CD8-positive, alpha-beta memory T cell (primary cell): ENCODE measurements at regions of chr10 and their contacts with region 1.

Region 1: GRCh38 chr10:97701438-97702069 is 12.0 kb upstream of the MARVELD1 start:
- DNase-seq: peak in 4 of 5 donors; percentile 24 to 67 (median 52)
- H3K4me3 ChIP-seq: no peak overlapping the region
- H3K4me3 Mint-ChIP-seq: no peak overlapping the region
- H3K27ac ChIP-seq: no peak overlapping the region
- H3K27ac Mint-ChIP-seq: no peak overlapping the region
- H3K4me1 ChIP-seq: no peaks in the 10 kb centered on the region
- H3K4me1 Mint-ChIP-seq: no peaks in the 10 kb centered on the region
- H3K27me3 ChIP-seq: no peaks in the 10 kb centered on the region
- H3K27me3 Mint-ChIP-seq: peaks cover 16 to 20% of the 10 kb centered on the region in 2 donors

Region 2: GRCh38 chr10:97149079-97149531 is 552.4 kb before region 1 on chr10:
- CTCF ChIA-PET with region 1: no interaction called
- POLR2A ChIA-PET with region 1: no interaction called
- DNase-seq: no peak
- H3K4me3 ChIP-seq: no peak overlapping the region
- H3K4me3 Mint-ChIP-seq: no peak overlapping the region
- H3K27ac ChIP-seq: no peak overlapping the region
- H3K27ac Mint-ChIP-seq: no peak overlapping the region
- H3K4me1 ChIP-seq: no peaks in the 10 kb centered on the region
- H3K4me1 Mint-ChIP-seq: no peaks in the 10 kb centered on the region
- H3K27me3 ChIP-seq: no peaks in the 10 kb centered on the region
- H3K27me3 Mint-ChIP-seq: peaks cover 3 to 11% of the 10 kb centered on the region in 2 donors

Region 3: DNA sequence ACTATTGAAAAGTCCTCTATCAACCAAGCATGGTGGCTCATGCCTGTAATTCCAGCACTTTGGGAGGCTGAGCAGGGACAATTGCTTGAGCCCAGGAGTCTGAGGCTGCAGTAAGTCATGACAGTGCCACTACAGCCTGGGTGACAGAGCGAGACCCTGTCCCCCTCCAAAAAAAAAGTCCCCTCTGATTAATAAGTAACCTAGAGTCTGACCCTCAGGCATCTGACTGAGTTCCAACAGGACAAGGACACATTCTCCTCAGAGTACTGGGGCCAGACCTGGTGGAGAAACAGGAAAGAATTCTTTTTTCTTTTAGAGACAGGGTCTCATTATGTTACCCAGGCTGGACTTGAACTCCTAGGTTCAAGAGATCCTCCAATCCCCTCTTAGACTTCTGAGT is 78.3 kb before region 1 on chr10:
- CTCF ChIA-PET with region 1: no interaction called
- POLR2A ChIA-PET with region 1: no interaction called
- DNase-seq: no peak
- H3K4me3 ChIP-seq: no peak overlapping the region
- H3K4me3 Mint-ChIP-seq: no peak overlapping the region
- H3K27ac ChIP-seq: no peak overlapping the region
- H3K27ac Mint-ChIP-seq: no peak overlapping the region
- H3K4me1 ChIP-seq: no peaks in the 10 kb centered on the region
- H3K4me1 Mint-ChIP-seq: no peaks in the 10 kb centered on the region
- H3K27me3 ChIP-seq: no peaks in the 10 kb centered on the region
- H3K27me3 Mint-ChIP-seq: no peaks in the 10 kb centered on the region

Region 4: GRCh38 chr10:97676770-97677581 is 24.6 kb before region 1 on chr10:
- CTCF ChIA-PET with region 1: interaction called, 19 read pairs
- POLR2A ChIA-PET with region 1: no interaction called
- DNase-seq: peak; percentile 21 to 62 (median 42)
- H3K4me3 ChIP-seq: no peak overlapping the region
- H3K4me3 Mint-ChIP-seq: no peak overlapping the region
- H3K27ac ChIP-seq: no peak overlapping the region
- H3K27ac Mint-ChIP-seq: peak overlapping the region in 3 of 8 donors; percentile 10 to 72 (median 58)
- H3K4me1 ChIP-seq: no peaks in the 10 kb centered on the region
- H3K4me1 Mint-ChIP-seq: no peaks in the 10 kb centered on the region
- H3K27me3 ChIP-seq: no peaks in the 10 kb centered on the region
- H3K27me3 Mint-ChIP-seq: no peaks in the 10 kb centered on the region

Region 5: GRCh38 chr10:97714048-97714371 is 12.5 kb after region 1 on chr10:
- CTCF ChIA-PET with region 1: interaction called, 16 read pairs
- POLR2A ChIA-PET with region 1: interaction called, 3 read pairs
- DNase-seq: peak; percentile 26 to 69 (median 50)
- H3K4me3 ChIP-seq: peak overlapping the region; percentile 59
- H3K4me3 Mint-ChIP-seq: peak overlapping the region; percentile 86 to 100 (median 99)
- H3K27ac ChIP-seq: peak overlapping the region; percentile 9
- H3K27ac Mint-ChIP-seq: peak overlapping the region; percentile 18 to 98 (median 95)
- H3K4me1 ChIP-seq: no peaks in the 10 kb centered on the region
- H3K4me1 Mint-ChIP-seq: peaks cover 9 to 23% (median 9%) of the 10 kb centered on the region in 3 donors
- H3K27me3 ChIP-seq: no peaks in the 10 kb centered on the region
- H3K27me3 Mint-ChIP-seq: peaks cover 18 to 23% of the 10 kb centered on the region in 2 donors

Region 6: GRCh38 chr10:97723001-97723400 is 21.4 kb after region 1 on chr10:
- CTCF ChIA-PET with region 1: interaction called, 199 read pairs
- POLR2A ChIA-PET with region 1: no interaction called
- DNase-seq: no peak
- H3K4me3 ChIP-seq: no peak overlapping the region
- H3K4me3 Mint-ChIP-seq: no peak overlapping the region
- H3K27ac ChIP-seq: no peak overlapping the region
- H3K27ac Mint-ChIP-seq: no peak overlapping the region
- H3K4me1 ChIP-seq: no peaks in the 10 kb centered on the region
- H3K4me1 Mint-ChIP-seq: no peaks in the 10 kb centered on the region
- H3K27me3 ChIP-seq: no peaks in the 10 kb centered on the region
- H3K27me3 Mint-ChIP-seq: peaks cover 2 to 27% of the 10 kb centered on the region in 2 donors

Region 7: GRCh38 chr10:97731346-97732051 is 29.9 kb after region 1 on chr10:
- CTCF ChIA-PET with region 1: interaction called, 199 read pairs
- POLR2A ChIA-PET with region 1: no interaction called
- DNase-seq: peak; percentile 32 to 61 (median 50)
- H3K4me3 ChIP-seq: no peak overlapping the region
- H3K4me3 Mint-ChIP-seq: peak overlapping the region in 1 of 7 donors; percentile 16
- H3K27ac ChIP-seq: no peak overlapping the region
- H3K27ac Mint-ChIP-seq: no peak overlapping the region
- H3K4me1 ChIP-seq: peaks cover 2% of the 10 kb centered on the region
- H3K4me1 Mint-ChIP-seq: peaks cover 6 to 9% (median 9%) of the 10 kb centered on the region in 3 donors
- H3K27me3 ChIP-seq: no peaks in the 10 kb centered on the region
- H3K27me3 Mint-ChIP-seq: peaks cover 3 to 22% of the 10 kb centered on the region in 2 donors

Region 8: GRCh38 chr10:97810446-97810845 is 108.9 kb after region 1 on chr10:
- CTCF ChIA-PET with region 1: no interaction called
- POLR2A ChIA-PET with region 1: no interaction called
- DNase-seq: no peak
- H3K4me3 ChIP-seq: no peak overlapping the region
- H3K4me3 Mint-ChIP-seq: no peak overlapping the region
- H3K27ac ChIP-seq: no peak overlapping the region
- H3K27ac Mint-ChIP-seq: no peak overlapping the region
- H3K4me1 ChIP-seq: no peaks in the 10 kb centered on the region
- H3K4me1 Mint-ChIP-seq: peaks cover 0 to 4% (median 3%) of the 10 kb centered on the region in 3 donors
- H3K27me3 ChIP-seq: no peaks in the 10 kb centered on the region
- H3K27me3 Mint-ChIP-seq: peaks cover 0 to 5% of the 10 kb centered on the region in 2 donors